Activated T-helper 2 cell treated with anti-CD3 and anti-CD28 coated beads, Interferon-gamma antibody, Interleukin-2, Interleukin-4, amounts not matched to agents 10 μg/mL and 5 μg/mL and 100 μg/mL, durations not matched to agents 14 hours and 24 hours and 36 hours (primary cell): ENCODE measurements at regions of chr17 and their contacts with region 1.

Region 1: GRCh38 chr17:82494236-82495055 is 25.1 kb upstream of the FOXK2 start:
- DNase-seq: peak; percentile 84
- H3K4me3 Mint-ChIP-seq: peak overlapping the region; percentile 54
- H3K27ac Mint-ChIP-seq: peak overlapping the region; percentile 88
- H3K4me1 Mint-ChIP-seq: peaks cover 25% of the 10 kb centered on the region
- H3K27me3 Mint-ChIP-seq: no peaks in the 10 kb centered on the region

Region 2: DNA sequence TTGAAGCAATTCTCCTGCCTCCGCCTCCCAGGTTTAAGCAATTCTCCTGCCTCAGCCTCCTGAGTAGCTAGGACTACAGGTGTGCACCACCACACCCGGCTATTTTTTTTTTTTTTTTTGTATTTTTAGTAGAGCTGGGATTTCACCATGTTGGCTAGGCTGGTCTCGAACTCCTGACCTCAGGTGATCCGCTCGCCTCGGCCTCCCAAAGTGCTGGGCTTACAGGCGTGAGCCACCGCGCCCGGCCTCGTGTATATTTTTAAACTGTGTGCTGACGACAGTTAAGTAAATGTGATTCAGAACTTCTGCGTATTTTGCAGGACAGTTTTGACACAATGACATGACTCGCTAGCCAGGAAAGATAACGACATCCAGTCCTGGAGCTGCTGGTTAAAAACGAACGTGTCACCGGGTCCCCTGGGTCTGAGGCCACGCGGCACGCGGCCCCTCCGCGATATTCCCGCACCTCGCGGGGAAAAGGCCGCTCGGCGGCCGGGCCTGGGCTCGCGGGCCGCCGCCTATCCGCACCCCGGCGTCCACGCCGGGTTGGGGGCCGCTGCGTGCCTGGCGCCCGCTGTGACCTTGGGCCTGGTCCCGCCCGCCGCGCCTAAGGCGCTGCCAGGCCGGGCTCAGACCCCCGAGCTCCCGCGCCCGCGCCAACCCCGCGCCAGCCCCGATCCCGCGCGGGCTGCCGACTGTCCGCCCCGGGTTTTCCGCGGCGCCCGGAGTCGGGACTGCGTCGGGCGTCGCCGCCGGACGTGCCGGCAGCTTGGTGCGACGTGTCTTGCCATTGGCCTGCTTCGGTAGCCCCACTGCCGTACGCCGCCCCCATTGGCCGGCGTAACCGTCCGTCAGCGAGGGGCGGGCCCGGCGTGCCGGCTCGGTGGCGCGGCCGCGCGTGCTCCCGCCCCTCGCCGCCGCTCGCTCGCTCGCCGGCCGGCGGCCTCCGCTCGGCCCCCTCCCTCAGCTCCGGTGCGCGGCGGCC is 24.7 kb after region 1 on chr17 and contains the start of gene FOXK2:
- intact Hi-C with region 1: loop called (anchors 2 kb)
- DNase-seq: peak; percentile 95
- H3K4me3 Mint-ChIP-seq: peak within 1 kb of the TSS; percentile 93
- H3K27ac Mint-ChIP-seq: peak within 1 kb of the TSS; percentile 95
- H3K4me1 Mint-ChIP-seq: peaks cover 16% of the 10 kb centered on the region
- H3K27me3 Mint-ChIP-seq: no peaks in the 10 kb centered on the region
- total RNA-seq, gene FOXK2: 92.9 and 95.2 TPM in 2 replicates

Region 3: GRCh38 chr17:82551779-82552457 is 57.5 kb after region 1 on chr17:
- intact Hi-C with region 1: loop called (anchors 2 kb)
- DNase-seq: peak; percentile 70
- H3K4me3 Mint-ChIP-seq: no peak overlapping the region
- H3K27ac Mint-ChIP-seq: no peak overlapping the region
- H3K4me1 Mint-ChIP-seq: peaks cover 27% of the 10 kb centered on the region
- H3K27me3 Mint-ChIP-seq: no peaks in the 10 kb centered on the region